HepG2 (cell line): ENCODE measurements at regions of chr17 and their contacts with region 1.

Region 1: GRCh38 chr17:42067351-42068091 is 17.1 kb upstream of the C17orf113 start:
- DNase-seq: peak; percentile 84
- ATAC-seq: peak; percentile 81
- H3K4me3 ChIP-seq: no peak overlapping the region
- H3K27ac ChIP-seq: no peak overlapping the region
- H3K4me1 ChIP-seq: peaks cover 13% of the 10 kb centered on the region
- H3K27me3 ChIP-seq: peaks cover 2 to 25% of the 10 kb centered on the region in 2 experiments; a peak in 3 of 5 replicates
- CTCF ChIP-seq: peak; percentile 96
- EP300 ChIP-seq: no peak
- POLR2A ChIP-seq: no peak
- RAD21 ChIP-seq: peak; percentile 96

Region 2: DNA sequence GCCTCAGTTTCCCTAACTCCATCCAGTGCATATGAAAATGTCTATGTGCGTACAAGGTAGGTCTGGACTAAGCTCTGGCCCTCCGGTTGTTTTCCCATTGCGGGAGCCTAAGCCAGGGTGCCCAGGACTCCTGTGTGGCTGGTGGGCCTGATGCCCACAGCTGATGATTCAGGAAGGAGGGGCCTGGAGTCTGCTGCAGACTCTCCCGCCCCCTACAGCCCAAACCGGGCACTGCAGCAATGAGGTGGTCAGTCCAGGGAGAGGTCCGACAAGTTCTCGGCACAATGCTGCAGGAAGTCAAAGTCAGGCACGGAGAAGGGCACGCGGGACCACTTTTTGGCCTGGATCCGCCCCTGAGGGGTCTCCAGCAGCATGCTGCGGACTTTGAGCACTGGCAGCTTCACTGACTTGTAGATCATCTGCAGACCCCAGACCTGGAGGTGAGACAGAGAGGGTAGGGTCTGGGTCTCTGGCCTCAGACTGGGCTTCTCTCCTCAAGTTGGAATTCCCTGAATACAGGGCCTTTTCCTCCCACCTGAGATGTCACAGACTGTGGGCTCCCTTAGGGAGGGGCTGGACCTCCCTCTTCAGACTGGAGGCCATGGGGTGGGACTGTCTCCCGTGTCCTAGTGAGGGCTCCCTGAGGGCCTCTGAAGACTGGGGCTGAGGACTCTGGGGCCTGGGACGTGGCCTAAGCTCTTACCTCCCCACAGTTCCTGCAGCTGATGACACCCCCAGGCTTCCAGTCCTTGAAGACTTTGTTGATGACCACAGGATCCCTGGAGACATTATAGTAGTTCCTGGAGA is 34.2 kb after region 1 on chr17:
- CTCF ChIA-PET with region 1: interaction called, 125 read pairs
- POLR2A ChIA-PET with region 1: interaction called, 4 read pairs
- in situ Hi-C with region 1: loop called (anchors 5 kb)
- intact Hi-C with region 1: loop called (anchors 1 kb)
- DNase-seq: peak; percentile 65
- ATAC-seq: peak; percentile 79
- H3K4me3 ChIP-seq: peak overlapping the region; percentile 27 to 63 (median 27); a peak in 5 of 6 replicates
- H3K27ac ChIP-seq: no peak overlapping the region
- H3K4me1 ChIP-seq: peaks cover 38% of the 10 kb centered on the region
- H3K27me3 ChIP-seq: peaks cover 6 to 35% of the 10 kb centered on the region in 2 experiments; a peak in 4 of 5 replicates
- CTCF ChIP-seq: peak; percentile 99
- EP300 ChIP-seq: no peak
- POLR2A ChIP-seq: no peak
- RAD21 ChIP-seq: peak; percentile 97

Region 3: GRCh38 chr17:42112552-42113176 is 45.1 kb after region 1 on chr17 and contains the start of gene DHX58:
- CTCF ChIA-PET with region 1: interaction called, 76 read pairs
- POLR2A ChIA-PET with region 1: interaction called, 4 read pairs
- in situ Hi-C with region 1: no loop called
- intact Hi-C with region 1: loop called (anchors 1 kb)
- DNase-seq: peak; percentile 64
- ATAC-seq: peak; percentile 80
- H3K4me3 ChIP-seq: peak within 1 kb of the TSS; percentile 43 to 73 (median 55); a peak in 5 of 6 replicates
- H3K27ac ChIP-seq: peak within 1 kb of the TSS; percentile 51
- H3K4me1 ChIP-seq: peaks cover 40% of the 10 kb centered on the region
- H3K27me3 ChIP-seq: no peaks in the 10 kb centered on the region
- CTCF ChIP-seq: peak; percentile 8; the same call in 1 of the 2 replicates
- EP300 ChIP-seq: no peak
- POLR2A ChIP-seq: peak in 1 of 2 experiments; percentile 74; a peak in 2 of 4 replicates
- RAD21 ChIP-seq: no peak
- total RNA-seq, gene DHX58: 3.9 and 6.7 TPM in 2 replicates